Posterior vena cava (tissue), 2 donors: ENCODE measurements at regions of chr3 and their contacts with region 1.

Region 1: GRCh38 chr3:151468284-151468917 is 7.5 kb upstream of the IGSF10 start:
- DNase-seq: no peak

Region 2: DNA sequence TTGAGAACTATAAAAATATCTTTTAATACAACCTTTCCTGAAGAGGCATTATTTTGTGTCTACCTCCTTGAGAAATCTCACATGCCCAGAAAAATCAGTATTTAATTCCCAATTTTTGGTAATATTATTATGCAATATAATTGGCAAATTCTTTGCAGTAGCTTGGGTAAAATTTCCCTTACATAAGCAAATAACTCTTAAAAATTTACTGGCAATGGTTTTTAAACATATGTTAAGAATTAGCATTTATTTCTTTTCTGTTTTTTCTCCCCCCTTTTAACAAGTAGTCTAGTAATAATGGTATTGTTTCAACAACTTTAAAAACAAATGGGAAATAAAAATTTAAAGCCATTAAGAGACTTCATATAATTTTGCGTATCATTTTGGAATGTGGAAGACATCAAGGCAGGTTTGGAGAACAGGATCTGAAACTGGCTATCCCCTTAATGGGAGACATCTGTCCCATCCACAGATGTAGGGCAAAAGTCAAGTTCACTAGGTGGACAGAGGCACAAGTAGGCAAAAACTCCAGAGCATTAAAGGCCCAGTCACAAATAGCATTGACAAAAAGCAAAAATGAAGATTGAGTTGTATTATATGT is 175.7 kb after region 1 on chr3:
- intact Hi-C with region 1: loop called in 1 of 2 experiments (anchors 10 kb)
- DNase-seq: no peak

Region 3: GRCh38 chr3:151660885-151661284 is 192.5 kb after region 1 on chr3:
- intact Hi-C with region 1: loop called in 1 of 2 experiments (anchors 10 kb)
- DNase-seq: no peak